AG04450 (cell line): ENCODE measurements at regions of chr12 and their contacts with region 1.

Region 1: GRCh38 chr12:69639400-69640016 is 28.8 kb upstream of the LRRC10 start:
- DNase-seq: peak; percentile 34
- H3K4me3 ChIP-seq: no peak overlapping the region
- H3K27ac ChIP-seq: no peak overlapping the region
- H3K27me3 ChIP-seq: no peaks in the 10 kb centered on the region
- CTCF ChIP-seq: peak; percentile 91

Region 2: DNA sequence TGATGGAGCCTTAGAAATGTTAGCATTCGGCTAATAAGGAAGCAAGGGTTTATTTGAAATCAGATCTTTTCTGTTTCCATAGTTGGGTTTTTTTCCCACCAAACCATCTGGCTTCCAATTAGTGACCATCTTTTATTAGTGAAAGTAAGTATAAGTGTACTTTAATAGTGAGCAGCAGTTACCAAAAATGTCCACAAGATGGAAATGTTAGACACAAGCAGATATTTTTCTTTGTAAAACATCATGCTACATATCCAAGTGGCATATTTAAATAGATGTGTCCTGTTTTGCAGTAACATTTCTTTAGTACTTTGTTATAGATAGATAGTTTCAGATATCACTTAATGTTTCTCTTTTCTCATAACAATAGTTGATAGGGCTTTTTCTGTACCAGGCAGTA is 251.1 kb before region 1 on chr12:
- CTCF ChIA-PET with region 1: interaction called, 55 read pairs
- POLR2A ChIA-PET with region 1: no interaction called
- DNase-seq: peak; percentile 50
- H3K4me3 ChIP-seq: no peak overlapping the region
- H3K27ac ChIP-seq: no peak overlapping the region
- H3K27me3 ChIP-seq: no peaks in the 10 kb centered on the region
- CTCF ChIP-seq: peak; percentile 73

Region 3: DNA sequence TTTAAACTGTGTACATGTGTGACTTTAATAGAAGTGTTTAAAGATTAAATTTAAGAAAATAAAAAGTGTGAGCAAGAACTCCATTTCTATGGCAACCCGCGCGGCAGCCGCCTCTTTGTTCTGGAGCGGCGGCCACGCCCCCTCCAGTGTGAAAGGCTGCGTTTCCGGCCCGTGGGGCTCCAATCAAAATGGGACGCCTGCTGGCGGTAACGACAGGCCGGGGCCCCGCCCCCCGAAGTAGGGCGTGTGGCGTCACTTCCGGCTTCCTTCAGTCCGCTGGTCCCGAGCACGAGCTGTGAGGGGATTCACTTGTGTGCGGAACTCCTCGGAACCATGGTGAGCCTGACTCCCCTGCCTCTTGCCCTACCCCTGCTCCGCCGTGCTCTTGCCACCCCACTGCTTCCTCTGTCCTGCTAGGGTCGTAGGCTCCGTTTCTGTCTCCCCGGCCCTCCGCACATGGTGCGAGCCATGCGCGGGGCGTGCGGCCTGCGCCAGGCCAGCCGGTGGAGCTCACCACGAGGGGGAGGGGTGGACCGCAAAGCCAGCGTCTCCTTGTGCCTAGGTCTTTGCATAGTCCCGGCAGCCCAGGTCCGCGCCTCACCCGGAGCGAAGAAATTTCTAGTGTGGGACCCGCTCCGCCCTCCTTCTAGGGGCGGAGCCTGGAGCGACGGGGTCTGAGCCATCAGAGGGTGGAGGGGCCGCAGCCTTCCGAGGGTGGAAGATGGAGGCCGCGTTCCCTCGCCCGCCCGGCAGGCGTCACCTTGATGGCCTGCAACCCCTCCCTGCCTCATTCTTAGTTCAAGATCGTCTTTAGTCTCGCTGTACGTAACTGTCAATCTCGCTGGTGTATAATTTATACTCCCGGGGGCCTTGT is 54.1 kb before region 1 on chr12 and contains the start of gene CCT2:
- CTCF ChIA-PET with region 1: interaction called, 11 read pairs
- POLR2A ChIA-PET with region 1: no interaction called
- DNase-seq: peak; percentile 85
- H3K4me3 ChIP-seq: peak within 1 kb of the TSS; percentile 100
- H3K27ac ChIP-seq: peak within 1 kb of the TSS; percentile 97
- H3K27me3 ChIP-seq: no peaks in the 10 kb centered on the region
- CTCF ChIP-seq: peak; percentile 60
- polyA plus RNA-seq, gene CCT2: 256 and 284 TPM in 2 replicates

Region 4: DNA sequence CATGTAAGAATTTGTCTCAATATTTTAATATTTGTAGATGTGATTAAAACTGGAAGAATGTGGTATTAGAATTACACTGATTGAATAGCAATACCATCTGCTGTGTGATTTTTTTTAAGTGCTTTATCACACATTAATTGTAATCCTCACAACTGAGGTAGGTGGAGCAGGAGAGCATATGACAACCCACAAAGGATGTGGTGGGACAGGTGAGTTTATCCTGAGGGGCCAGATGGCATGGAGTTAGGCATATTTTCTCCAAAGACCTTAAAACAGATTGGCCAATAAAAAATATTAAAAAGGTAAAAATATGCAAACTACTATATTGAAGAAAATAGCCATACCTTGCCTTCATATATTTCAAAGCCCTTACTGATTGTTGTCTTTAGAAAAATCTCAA is 36.6 kb before region 1 on chr12:
- CTCF ChIA-PET with region 1: interaction called, 12 read pairs
- POLR2A ChIA-PET with region 1: no interaction called
- DNase-seq: no peak
- H3K4me3 ChIP-seq: no peak overlapping the region
- H3K27ac ChIP-seq: no peak overlapping the region
- H3K27me3 ChIP-seq: no peaks in the 10 kb centered on the region
- CTCF ChIP-seq: no peak

Region 5: DNA sequence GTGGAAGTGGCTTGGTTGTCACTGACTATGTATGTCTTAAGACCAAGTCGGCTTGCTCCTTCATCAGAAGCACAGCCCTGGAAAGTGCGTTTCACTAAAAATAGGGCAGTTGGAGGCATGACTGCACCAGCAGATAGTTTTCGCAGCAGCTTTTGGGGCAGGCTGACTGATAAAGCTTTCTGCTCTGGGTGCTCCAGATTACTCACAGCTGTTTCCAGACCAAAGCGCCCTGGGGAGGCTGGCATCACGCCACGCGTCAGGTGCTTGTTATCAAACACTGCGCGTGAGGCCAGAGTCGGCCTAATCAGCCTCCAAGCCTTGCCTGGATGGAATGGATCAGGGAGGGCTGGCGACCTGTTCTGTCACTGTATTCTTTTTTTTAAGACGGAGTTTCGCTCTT is 15.5 kb before region 1 on chr12:
- CTCF ChIA-PET with region 1: interaction called, 59 read pairs
- POLR2A ChIA-PET with region 1: no interaction called
- DNase-seq: peak; percentile 16
- H3K4me3 ChIP-seq: no peak overlapping the region
- H3K27ac ChIP-seq: no peak overlapping the region
- H3K27me3 ChIP-seq: peaks cover 17% of the 10 kb centered on the region
- CTCF ChIP-seq: no peak

Region 6: DNA sequence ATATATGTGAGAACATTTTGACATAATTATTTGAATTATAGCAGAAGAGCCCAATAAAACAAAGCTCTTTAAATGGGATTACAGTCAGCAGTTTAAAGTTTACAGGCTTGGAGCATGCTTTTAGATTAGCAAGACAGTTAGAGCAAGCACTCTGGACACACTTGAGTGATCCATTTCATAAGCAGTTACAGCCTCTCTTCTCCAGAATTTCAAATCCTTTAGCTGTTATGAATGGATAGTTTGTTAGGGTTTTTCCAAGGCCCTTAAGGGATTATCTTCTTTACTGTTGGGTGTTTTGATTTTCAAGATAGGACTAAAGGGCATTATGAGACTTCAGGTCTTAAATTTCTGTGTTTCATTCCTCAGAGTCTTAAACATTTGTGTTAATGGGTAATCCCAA is 23.3 kb after region 1 on chr12:
- CTCF ChIA-PET with region 1: interaction called, 39 read pairs
- POLR2A ChIA-PET with region 1: no interaction called
- DNase-seq: no peak
- H3K4me3 ChIP-seq: no peak overlapping the region
- H3K27ac ChIP-seq: no peak overlapping the region
- H3K27me3 ChIP-seq: no peaks in the 10 kb centered on the region
- CTCF ChIP-seq: no peak